WTC11 (cell line): ENCODE measurements at regions of chr10 and their contacts with region 1.

Region 1: DNA sequence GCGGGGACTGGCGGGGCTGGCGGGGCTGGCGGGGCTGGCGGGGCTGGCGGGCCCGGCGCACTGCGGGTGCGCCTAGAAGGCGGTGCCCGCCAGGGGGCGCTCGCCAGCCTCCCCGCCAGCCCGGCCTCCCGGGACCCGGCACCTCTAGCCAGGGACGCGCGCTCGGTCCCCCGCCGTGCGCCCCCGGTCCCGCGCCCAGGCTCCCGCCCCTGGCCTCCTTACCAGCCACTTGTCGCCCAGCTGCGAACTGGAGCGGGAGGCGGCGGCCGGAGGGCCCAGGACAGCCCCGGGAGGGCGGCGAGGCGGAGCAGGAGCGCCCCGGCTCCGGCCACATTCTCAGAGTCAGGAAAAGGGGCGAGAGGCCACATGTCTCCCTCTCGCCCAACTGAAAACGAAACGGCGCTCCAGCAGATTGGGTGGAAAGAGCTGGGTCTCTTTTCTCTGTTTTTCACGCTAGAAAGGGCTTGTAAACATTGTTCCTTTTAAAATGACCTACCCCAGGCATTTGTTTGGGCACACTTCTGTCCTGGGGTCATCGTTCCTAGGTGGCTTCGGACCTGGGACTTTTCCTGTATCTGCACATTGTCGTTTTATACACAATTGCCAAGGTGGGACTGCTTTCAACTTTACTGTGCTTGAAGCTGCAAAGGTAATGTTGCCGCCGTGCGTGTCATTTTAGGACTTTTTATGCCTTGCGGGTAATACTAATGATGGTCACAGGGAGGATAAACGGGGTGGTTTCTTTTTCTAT is 378 bp upstream of the PRKCQ start:
- DNase-seq: peak; percentile 81
- ATAC-seq: peak; percentile 74
- H3K4me3 Mint-ChIP-seq: peak overlapping the region; percentile 85
- H3K27ac Mint-ChIP-seq: peak overlapping the region; percentile 58
- H3K4me1 Mint-ChIP-seq: peaks cover 35% of the 10 kb centered on the region
- H3K27me3 Mint-ChIP-seq: peaks cover 5% of the 10 kb centered on the region
- CTCF ChIP-seq: peak; percentile 76

Region 2: DNA sequence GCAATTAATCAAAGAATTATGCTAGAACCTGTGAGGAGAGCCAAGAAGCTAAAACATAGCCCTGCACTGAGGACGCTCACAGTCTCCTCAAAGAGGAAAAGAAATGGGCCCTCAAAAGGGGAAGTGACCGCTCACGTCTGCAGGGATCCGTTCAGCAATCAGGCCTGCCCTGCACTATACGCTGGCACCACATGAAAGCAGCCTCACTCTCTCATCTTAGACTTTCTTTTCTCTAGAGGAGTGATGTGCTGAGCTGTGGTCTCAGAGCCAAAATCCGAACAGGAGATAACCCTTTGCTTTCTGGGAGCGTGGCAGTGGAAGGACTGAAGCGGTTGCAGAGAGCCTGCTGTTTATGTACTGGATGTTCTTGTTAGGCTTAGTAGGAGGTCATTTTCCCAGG is 512.0 kb before region 1 on chr10:
- CTCF ChIA-PET with region 1: no interaction called
- POLR2A ChIA-PET with region 1: no interaction called
- DNase-seq: no peak
- ATAC-seq: no peak
- H3K4me3 Mint-ChIP-seq: no peak overlapping the region
- H3K27ac Mint-ChIP-seq: no peak overlapping the region
- H3K4me1 Mint-ChIP-seq: peaks cover 3% of the 10 kb centered on the region; the same call in 1 of the 2 replicates
- H3K27me3 Mint-ChIP-seq: peaks cover 3% of the 10 kb centered on the region; the same call in 1 of the 2 replicates
- CTCF ChIP-seq: no peak

Region 3: GRCh38 chr10:6416892-6417512 is 163.5 kb before region 1 on chr10:
- CTCF ChIA-PET with region 1: no interaction called
- POLR2A ChIA-PET with region 1: no interaction called
- DNase-seq: no peak
- ATAC-seq: peak; percentile 81
- H3K4me3 Mint-ChIP-seq: no peak overlapping the region
- H3K27ac Mint-ChIP-seq: no peak overlapping the region
- H3K4me1 Mint-ChIP-seq: peaks cover 4% of the 10 kb centered on the region
- H3K27me3 Mint-ChIP-seq: no peaks in the 10 kb centered on the region
- CTCF ChIP-seq: peak; percentile 78

Region 4: GRCh38 chr10:6507311-6507710 is 73.1 kb before region 1 on chr10:
- CTCF ChIA-PET with region 1: no interaction called
- POLR2A ChIA-PET with region 1: no interaction called
- DNase-seq: no peak
- ATAC-seq: no peak
- H3K4me3 Mint-ChIP-seq: no peak overlapping the region
- H3K27ac Mint-ChIP-seq: no peak overlapping the region
- H3K4me1 Mint-ChIP-seq: no peaks in the 10 kb centered on the region; the same call in 1 of the 2 replicates
- H3K27me3 Mint-ChIP-seq: no peaks in the 10 kb centered on the region
- CTCF ChIP-seq: no peak

Region 5: DNA sequence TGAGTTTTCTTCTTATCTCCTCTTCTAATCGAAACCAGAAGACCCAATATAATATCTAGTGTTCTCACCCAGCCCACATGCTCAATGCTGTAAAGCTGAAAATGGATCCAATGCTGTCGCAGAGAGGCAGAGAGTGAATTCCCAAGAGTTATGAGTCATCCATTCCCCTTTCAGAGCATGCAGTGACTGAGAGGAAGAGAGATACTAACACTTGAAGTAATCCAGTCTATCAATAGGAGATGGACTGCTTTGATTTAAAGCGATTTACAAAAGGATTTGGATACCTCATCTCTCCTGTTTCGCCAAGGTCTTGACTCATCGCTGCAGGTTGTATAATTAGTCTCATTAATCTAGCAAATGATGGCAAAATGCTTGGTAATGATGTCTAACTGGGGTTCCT is 41.1 kb after region 1 on chr10:
- CTCF ChIA-PET with region 1: interaction called, 16 read pairs
- POLR2A ChIA-PET with region 1: no interaction called
- DNase-seq: no peak
- ATAC-seq: no peak
- H3K4me3 Mint-ChIP-seq: no peak overlapping the region
- H3K27ac Mint-ChIP-seq: no peak overlapping the region
- H3K4me1 Mint-ChIP-seq: peaks cover 36% of the 10 kb centered on the region
- H3K27me3 Mint-ChIP-seq: peaks cover 2% of the 10 kb centered on the region
- CTCF ChIP-seq: no peak